Activated CD4-positive, alpha-beta T cell treated with anti-CD3 and anti-CD28 coated beads, Interleukin-2, amount 10 ng/mL, durations not matched to agents 24 days and 14 days (primary cell): ENCODE measurements at regions of chr4 and their contacts with region 1.

Region 1: GRCh38 chr4:81405894-81406401 is 65.8 kb downstream of the RASGEF1B start:
- DNase-seq: peak; percentile 84
- H3K4me3 Mint-ChIP-seq: no peak overlapping the region
- H3K27ac Mint-ChIP-seq: no peak overlapping the region
- H3K4me1 Mint-ChIP-seq: peaks cover 3% of the 10 kb centered on the region
- H3K27me3 Mint-ChIP-seq: no peaks in the 10 kb centered on the region

Region 2: GRCh38 chr4:81844717-81845116 is 438.8 kb after region 1 on chr4:
- intact Hi-C with region 1: loop called (anchors 1 kb)
- DNase-seq: peak; percentile 90
- H3K4me3 Mint-ChIP-seq: no peak overlapping the region
- H3K27ac Mint-ChIP-seq: no peak overlapping the region
- H3K4me1 Mint-ChIP-seq: peaks cover 4% of the 10 kb centered on the region
- H3K27me3 Mint-ChIP-seq: no peaks in the 10 kb centered on the region

Region 3: DNA sequence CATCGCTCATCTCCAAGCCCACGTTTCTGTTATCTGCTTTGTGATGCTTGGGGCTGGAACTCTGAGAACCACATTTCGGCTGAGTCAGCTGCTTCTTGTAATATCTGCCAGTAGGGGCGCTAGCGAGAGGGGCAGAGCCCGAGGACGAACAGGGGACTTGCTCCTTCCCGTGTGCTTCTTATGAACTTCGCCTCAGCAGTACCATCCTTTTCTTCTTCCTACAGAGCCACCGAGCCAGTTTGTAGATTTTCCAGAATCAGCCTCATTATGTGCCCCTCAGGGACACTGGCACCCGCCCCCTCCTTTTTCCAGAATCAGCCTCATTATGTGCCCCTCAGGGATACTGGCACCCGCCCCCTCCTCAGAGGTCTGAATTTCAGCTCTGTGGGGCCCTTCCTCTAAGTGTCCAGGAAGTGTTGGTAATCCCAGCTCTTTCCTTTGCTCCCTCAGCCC is 507.5 kb after region 1 on chr4:
- intact Hi-C with region 1: loop called (anchors 5 kb)
- DNase-seq: peak; percentile 85
- H3K4me3 Mint-ChIP-seq: no peak overlapping the region
- H3K27ac Mint-ChIP-seq: no peak overlapping the region
- H3K4me1 Mint-ChIP-seq: peaks cover 4% of the 10 kb centered on the region
- H3K27me3 Mint-ChIP-seq: peaks cover 9% of the 10 kb centered on the region

Region 4: GRCh38 chr4:82044142-82044993 is 638.4 kb after region 1 on chr4:
- intact Hi-C with region 1: no loop called
- DNase-seq: no peak
- H3K4me3 Mint-ChIP-seq: no peak overlapping the region
- H3K27ac Mint-ChIP-seq: no peak overlapping the region
- H3K4me1 Mint-ChIP-seq: peaks cover 3% of the 10 kb centered on the region
- H3K27me3 Mint-ChIP-seq: peaks cover 31% of the 10 kb centered on the region

Region 5: GRCh38 chr4:82201805-82202641 is 796.1 kb after region 1 on chr4:
- intact Hi-C with region 1: loop called (anchors 1 kb)
- DNase-seq: peak; percentile 80
- H3K4me3 Mint-ChIP-seq: no peak overlapping the region
- H3K27ac Mint-ChIP-seq: no peak overlapping the region
- H3K4me1 Mint-ChIP-seq: peaks cover 2% of the 10 kb centered on the region
- H3K27me3 Mint-ChIP-seq: peaks cover 24% of the 10 kb centered on the region

Region 6: DNA sequence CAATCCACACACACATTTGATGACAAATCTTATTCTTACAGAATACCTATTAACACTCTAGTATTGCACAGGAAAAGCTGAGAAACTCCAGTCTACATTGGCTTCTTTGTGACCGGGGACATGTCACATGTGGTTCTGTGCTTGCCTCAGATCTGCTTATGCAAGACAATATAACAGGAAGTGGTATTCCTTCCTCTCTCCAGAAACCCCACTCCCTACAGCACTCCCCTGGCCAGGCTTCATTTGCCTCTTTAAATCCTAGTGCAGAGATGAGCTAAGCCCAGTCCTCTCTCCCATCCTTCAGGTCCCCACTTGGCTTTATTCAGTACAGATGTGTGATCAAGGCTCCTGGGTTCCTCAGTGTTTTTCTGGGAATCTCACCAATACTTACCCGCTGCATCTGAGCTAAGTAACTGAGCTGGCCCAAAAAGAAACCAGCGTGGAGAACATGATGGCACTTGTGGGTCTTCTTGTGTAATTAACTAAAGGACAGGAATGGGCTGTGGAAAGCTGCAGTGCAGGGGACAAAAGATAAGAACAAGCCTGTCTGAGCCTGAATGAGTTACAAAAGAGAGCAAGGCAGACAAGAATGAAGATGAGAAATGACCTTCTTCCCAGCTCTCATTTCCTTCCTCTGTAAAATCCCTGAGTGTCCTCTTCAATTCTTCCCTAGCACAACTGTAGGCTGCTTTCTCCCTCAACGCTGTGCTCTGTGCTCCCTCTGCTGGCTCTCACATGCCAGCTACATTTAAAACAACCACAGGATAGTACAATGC is 862.3 kb after region 1 on chr4:
- intact Hi-C with region 1: loop called (anchors 1 kb)
- DNase-seq: peak; percentile 80
- H3K4me3 Mint-ChIP-seq: no peak overlapping the region
- H3K27ac Mint-ChIP-seq: no peak overlapping the region
- H3K4me1 Mint-ChIP-seq: peaks cover 11% of the 10 kb centered on the region
- H3K27me3 Mint-ChIP-seq: peaks cover 11% of the 10 kb centered on the region

Region 7: DNA sequence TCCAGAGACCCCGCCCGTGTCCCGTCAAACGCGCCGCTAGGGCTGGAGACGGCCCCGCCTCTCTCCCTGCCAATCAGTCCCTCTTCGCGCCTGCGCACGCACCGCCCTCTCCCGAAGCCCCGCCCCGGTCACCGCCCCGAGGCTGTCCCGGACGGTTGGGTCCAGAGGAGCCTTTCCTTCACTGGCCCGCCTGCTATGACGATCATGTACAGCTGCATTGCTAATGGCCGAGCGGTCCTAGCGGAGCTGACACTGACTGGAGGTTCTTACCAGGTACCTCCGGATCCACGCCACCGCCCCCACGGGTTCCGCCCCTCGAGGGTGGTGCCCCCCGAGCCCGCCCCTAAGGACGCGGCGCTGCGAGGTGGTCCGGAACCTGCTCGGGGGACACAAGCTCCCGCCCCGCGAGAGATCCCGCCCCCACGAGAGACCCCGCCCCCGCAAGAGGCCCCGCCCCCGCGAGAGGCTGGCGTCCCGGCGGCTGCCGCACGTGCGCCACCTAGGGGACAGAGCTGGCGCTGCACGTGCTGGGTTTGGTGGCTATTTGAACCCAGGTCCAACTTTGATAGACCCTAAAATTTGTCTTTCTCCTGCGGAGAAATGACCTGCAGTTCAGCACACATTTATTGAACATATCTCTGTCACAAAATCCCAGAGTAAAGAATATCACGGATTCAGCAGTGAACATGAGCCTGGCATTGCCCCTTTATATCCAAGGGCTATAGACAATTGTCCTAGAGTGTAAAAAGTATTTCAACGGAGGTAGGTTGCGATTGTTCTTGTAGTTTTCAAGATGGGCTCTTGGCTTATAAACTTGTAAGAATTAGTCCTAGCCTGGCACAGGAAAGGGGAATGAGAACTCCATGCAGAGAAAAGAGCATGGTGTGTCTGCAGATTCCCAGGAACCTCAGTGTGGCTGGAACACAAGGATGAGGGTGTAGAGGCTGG is 879.2 kb after region 1 on chr4:
- intact Hi-C with region 1: loop called (anchors 5 kb)
- DNase-seq: peak; percentile 100
- H3K4me3 Mint-ChIP-seq: peak overlapping the region; percentile 72
- H3K27ac Mint-ChIP-seq: peak overlapping the region; percentile 48
- H3K4me1 Mint-ChIP-seq: peaks cover 12% of the 10 kb centered on the region
- H3K27me3 Mint-ChIP-seq: peaks cover 27% of the 10 kb centered on the region

Region 8: DNA sequence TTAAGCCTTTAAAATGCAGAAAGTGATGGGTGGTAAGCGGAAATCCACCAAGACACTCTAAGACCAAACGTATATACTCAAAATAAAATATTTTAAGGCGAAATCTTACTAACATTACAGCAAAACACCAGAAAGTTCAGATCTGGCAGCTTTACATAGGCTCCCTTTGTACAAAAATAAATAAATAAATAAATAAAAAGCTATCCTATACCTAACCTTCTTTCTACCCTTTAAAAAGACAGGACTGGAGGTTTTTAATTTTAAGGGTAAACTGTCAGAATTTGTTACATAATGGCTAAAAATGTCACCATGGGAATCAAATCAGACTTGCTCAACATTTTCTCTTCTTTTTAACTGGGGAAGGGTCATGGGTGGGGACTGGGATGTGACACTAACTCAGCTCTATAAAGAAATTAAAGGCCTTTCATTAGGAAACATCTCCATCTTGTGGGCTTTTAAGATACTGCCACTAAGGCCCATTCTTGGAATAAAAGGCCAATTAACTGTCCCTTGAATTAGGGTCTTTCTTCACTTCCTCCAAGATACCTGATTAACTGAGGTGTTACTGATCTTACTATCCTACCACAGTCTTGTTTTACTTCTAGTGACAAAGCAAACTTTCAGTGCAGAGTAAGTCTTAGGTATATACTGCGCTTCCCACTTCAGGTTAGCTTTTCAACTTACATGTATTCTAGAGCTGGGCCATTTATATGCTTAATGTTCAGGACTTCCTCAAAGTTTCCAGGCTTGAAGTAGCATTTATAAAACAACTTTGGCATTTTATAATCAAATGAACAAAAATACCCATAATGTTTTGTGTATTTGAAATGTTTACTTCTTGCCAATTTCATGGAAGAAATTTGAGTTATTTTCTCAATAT is 954.6 kb after region 1 on chr4:
- intact Hi-C with region 1: loop called (anchors 10 kb)
- DNase-seq: peak; percentile 63
- H3K4me3 Mint-ChIP-seq: peak overlapping the region; percentile 33
- H3K27ac Mint-ChIP-seq: no peak overlapping the region
- H3K4me1 Mint-ChIP-seq: peaks cover 71% of the 10 kb centered on the region
- H3K27me3 Mint-ChIP-seq: no peaks in the 10 kb centered on the region